Mammary epithelial cell (primary cell): ENCODE measurements at regions of chr11 and their contacts with region 1.

Region 1: DNA sequence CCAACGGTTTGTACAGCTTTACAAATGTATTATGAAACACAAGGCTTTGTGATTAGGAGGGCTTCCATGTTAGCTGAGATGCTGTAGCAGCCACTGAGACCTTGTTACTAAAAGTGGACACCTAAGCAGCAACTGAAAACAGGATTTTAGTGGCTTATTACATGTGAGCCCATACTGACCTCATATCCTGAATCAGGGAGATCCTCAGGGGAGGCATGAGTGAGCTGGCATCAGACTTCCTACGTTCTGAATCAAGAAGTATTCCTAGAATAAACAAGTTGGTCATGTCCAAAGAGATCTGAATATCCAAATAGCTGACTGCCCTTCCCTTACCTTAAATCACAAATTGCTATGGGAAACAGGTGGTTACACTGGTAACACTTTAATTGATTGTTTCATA is 59.1 kb upstream of the SCUBE2 start:
- DNase-seq: peak; percentile 74
- H3K4me3 ChIP-seq: no peak overlapping the region
- H3K27ac ChIP-seq: peak overlapping the region; percentile 16
- H3K4me1 ChIP-seq: peaks cover 9% of the 10 kb centered on the region
- H3K27me3 ChIP-seq: no peaks in the 10 kb centered on the region
- CTCF ChIP-seq: no peak

Region 2: GRCh38 chr11:8863838-8864237 is 286.7 kb before region 1 on chr11:
- CTCF ChIA-PET with region 1: no interaction called
- dilution Hi-C with region 1: no loop called
- in situ Hi-C with region 1: no loop called
- intact Hi-C with region 1: no loop called
- DNase-seq: peak; percentile 65
- H3K4me3 ChIP-seq: no peak overlapping the region
- H3K27ac ChIP-seq: no peak overlapping the region
- H3K4me1 ChIP-seq: peaks cover 8% of the 10 kb centered on the region
- H3K27me3 ChIP-seq: no peaks in the 10 kb centered on the region
- CTCF ChIP-seq: no peak

Region 3: DNA sequence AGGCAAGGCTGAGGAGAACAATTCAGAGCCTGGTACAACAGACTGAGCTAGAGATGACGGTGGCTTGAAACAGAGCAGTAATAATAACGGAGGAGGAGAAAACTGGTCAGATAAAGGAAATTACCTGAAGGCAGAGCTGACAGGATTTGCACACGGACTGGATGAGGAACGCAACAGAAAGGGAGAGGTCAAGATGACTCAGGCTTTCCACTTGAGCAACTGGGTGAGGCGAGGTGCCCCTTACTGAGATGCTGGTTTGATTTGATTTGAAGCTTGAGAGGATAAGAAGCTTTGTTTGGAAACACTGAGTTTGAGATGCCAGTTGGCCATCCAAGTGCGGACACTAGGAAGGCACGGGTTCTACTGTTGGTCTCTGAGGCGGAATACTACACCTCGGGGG is 111.3 kb before region 1 on chr11:
- CTCF ChIA-PET with region 1: no interaction called
- dilution Hi-C with region 1: no loop called
- in situ Hi-C with region 1: no loop called
- intact Hi-C with region 1: no loop called
- DNase-seq: peak; percentile 51
- H3K4me3 ChIP-seq: no peak overlapping the region
- H3K27ac ChIP-seq: no peak overlapping the region
- H3K4me1 ChIP-seq: no peaks in the 10 kb centered on the region
- H3K27me3 ChIP-seq: no peaks in the 10 kb centered on the region
- CTCF ChIP-seq: no peak

Region 4: GRCh38 chr11:9053316-9054035 is 97.0 kb before region 1 on chr11:
- CTCF ChIA-PET with region 1: no interaction called
- dilution Hi-C with region 1: loop called (anchors 5 kb)
- in situ Hi-C with region 1: no loop called
- intact Hi-C with region 1: no loop called
- DNase-seq: no peak
- H3K4me3 ChIP-seq: no peak overlapping the region
- H3K27ac ChIP-seq: no peak overlapping the region
- H3K4me1 ChIP-seq: no peaks in the 10 kb centered on the region
- H3K27me3 ChIP-seq: no peaks in the 10 kb centered on the region
- CTCF ChIP-seq: no peak